ENCODE measurements at regions of chrX and their contacts with region 1.

Region 1: DNA sequence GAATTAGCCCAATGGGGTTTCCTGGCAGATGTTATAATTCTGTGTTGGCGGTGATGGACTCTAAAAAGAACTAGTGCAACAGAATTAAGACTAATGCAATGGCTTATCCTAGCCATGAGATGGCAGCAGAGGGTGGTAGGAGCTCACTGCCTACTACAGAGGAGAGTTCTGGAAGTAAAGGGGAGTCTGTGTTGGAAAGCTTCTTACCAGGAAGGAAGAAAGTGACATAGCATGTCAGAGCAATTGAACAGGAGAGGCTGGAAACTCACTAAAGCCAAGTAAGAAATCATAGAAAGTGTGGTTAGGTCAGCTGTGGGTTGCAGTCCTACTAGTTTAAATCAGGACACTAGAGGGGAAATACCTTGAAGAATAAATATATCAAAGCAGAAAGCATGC is 6.3 kb upstream of the TRPC5OS start:
- DNase-seq: peak; percentile 63
- ATAC-seq: peak; percentile 95
- H3K4me3 ChIP-seq: no peak overlapping the region
- H3K27ac ChIP-seq: no peak overlapping the region
- H3K4me1 ChIP-seq: no peaks in the 10 kb centered on the region
- H3K27me3 ChIP-seq: peaks cover 5% of the 10 kb centered on the region
- CTCF ChIP-seq: peak; percentile 71
- POLR2A ChIP-seq: no peak
- RAD21 ChIP-seq: peak; percentile 76

Region 2: DNA sequence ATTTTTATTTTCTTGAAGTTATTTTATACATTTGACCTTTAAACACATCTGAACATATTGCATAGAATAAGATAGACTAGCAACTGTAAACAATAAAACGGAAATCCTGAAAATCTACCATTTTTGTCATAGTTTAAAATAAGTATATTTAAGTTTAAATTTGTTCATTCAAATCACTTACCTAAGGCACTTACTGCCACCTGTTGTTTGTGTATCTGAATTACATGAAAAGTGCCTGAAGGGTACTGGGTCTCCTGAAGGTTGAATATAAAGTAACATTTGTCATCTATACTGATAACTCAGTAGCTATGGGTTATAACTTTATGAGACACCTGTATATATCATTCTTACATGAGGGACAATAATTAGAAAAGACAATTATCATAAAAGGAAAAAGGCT is 174.4 kb after region 1 on chrX:
- CTCF ChIA-PET with region 1: no interaction called
- POLR2A ChIA-PET with region 1: no interaction called
- dilution Hi-C with region 1: no loop called
- in situ Hi-C with region 1: no loop called
- intact Hi-C with region 1: loop called (anchors 1 kb)
- DNase-seq: peak; percentile 15
- ATAC-seq: no peak
- H3K4me3 ChIP-seq: no peak overlapping the region
- H3K27ac ChIP-seq: no peak overlapping the region
- H3K4me1 ChIP-seq: no peaks in the 10 kb centered on the region
- H3K27me3 ChIP-seq: peaks cover 5% of the 10 kb centered on the region
- CTCF ChIP-seq: peak; percentile 39; the same call in 1 of the 2 replicates
- POLR2A ChIP-seq: no peak
- RAD21 ChIP-seq: no peak

Region 3: GRCh38 chrX:112058255-112058654 is 188.6 kb after region 1 on chrX:
- CTCF ChIA-PET with region 1: no interaction called
- POLR2A ChIA-PET with region 1: no interaction called
- dilution Hi-C with region 1: no loop called
- in situ Hi-C with region 1: no loop called
- intact Hi-C with region 1: no loop called
- DNase-seq: peak; percentile 81
- ATAC-seq: peak; percentile 91
- H3K4me3 ChIP-seq: no peak overlapping the region
- H3K27ac ChIP-seq: peak overlapping the region; percentile 71; the same call in 1 of the 2 replicates
- H3K4me1 ChIP-seq: peaks cover 3% of the 10 kb centered on the region; the same call in 1 of the 2 replicates
- H3K27me3 ChIP-seq: peaks cover 2% of the 10 kb centered on the region; the same call in 1 of the 2 replicates
- CTCF ChIP-seq: no peak
- POLR2A ChIP-seq: no peak
- RAD21 ChIP-seq: no peak

Region 4: GRCh38 chrX:112368373-112368772 is 498.7 kb after region 1 on chrX:
- CTCF ChIA-PET with region 1: no interaction called
- POLR2A ChIA-PET with region 1: no interaction called
- dilution Hi-C with region 1: no loop called
- in situ Hi-C with region 1: no loop called
- intact Hi-C with region 1: loop called (anchors 5 kb)
- DNase-seq: no peak
- ATAC-seq: no peak
- H3K4me3 ChIP-seq: no peak overlapping the region
- H3K27ac ChIP-seq: no peak overlapping the region
- H3K4me1 ChIP-seq: no peaks in the 10 kb centered on the region
- H3K27me3 ChIP-seq: peaks cover 3% of the 10 kb centered on the region; the same call in 1 of the 2 replicates
- CTCF ChIP-seq: peak; percentile 31; the same call in 1 of the 2 replicates
- POLR2A ChIP-seq: no peak
- RAD21 ChIP-seq: peak; percentile 42

Region 5: GRCh38 chrX:112636951-112637541 is 767.4 kb after region 1 on chrX:
- CTCF ChIA-PET with region 1: no interaction called
- POLR2A ChIA-PET with region 1: no interaction called
- dilution Hi-C with region 1: no loop called
- in situ Hi-C with region 1: loop called (anchors 10 kb)
- intact Hi-C with region 1: loop called (anchors 1 kb)
- DNase-seq: peak; percentile 87
- ATAC-seq: peak; percentile 79
- H3K4me3 ChIP-seq: no peak overlapping the region
- H3K27ac ChIP-seq: peak overlapping the region; percentile 96
- H3K4me1 ChIP-seq: peaks cover 8% of the 10 kb centered on the region; the same call in 1 of the 2 replicates
- H3K27me3 ChIP-seq: no peaks in the 10 kb centered on the region; the same call in 1 of the 2 replicates
- CTCF ChIP-seq: no peak
- POLR2A ChIP-seq: no peak
- RAD21 ChIP-seq: no peak

Region 6: GRCh38 chrX:112731793-112732575 is 862.3 kb after region 1 on chrX:
- CTCF ChIA-PET with region 1: no interaction called
- POLR2A ChIA-PET with region 1: no interaction called
- dilution Hi-C with region 1: no loop called
- in situ Hi-C with region 1: no loop called
- intact Hi-C with region 1: loop called (anchors 5 kb)
- DNase-seq: peak; percentile 32
- ATAC-seq: no peak
- H3K4me3 ChIP-seq: no peak overlapping the region
- H3K27ac ChIP-seq: no peak overlapping the region
- H3K4me1 ChIP-seq: no peaks in the 10 kb centered on the region
- H3K27me3 ChIP-seq: no peaks in the 10 kb centered on the region; the same call in none of the 2 replicates
- CTCF ChIP-seq: peak; percentile 49
- POLR2A ChIP-seq: no peak
- RAD21 ChIP-seq: peak; percentile 43